ENCODE measurements at regions of chr22 and their contacts with region 1.

Region 1: DNA sequence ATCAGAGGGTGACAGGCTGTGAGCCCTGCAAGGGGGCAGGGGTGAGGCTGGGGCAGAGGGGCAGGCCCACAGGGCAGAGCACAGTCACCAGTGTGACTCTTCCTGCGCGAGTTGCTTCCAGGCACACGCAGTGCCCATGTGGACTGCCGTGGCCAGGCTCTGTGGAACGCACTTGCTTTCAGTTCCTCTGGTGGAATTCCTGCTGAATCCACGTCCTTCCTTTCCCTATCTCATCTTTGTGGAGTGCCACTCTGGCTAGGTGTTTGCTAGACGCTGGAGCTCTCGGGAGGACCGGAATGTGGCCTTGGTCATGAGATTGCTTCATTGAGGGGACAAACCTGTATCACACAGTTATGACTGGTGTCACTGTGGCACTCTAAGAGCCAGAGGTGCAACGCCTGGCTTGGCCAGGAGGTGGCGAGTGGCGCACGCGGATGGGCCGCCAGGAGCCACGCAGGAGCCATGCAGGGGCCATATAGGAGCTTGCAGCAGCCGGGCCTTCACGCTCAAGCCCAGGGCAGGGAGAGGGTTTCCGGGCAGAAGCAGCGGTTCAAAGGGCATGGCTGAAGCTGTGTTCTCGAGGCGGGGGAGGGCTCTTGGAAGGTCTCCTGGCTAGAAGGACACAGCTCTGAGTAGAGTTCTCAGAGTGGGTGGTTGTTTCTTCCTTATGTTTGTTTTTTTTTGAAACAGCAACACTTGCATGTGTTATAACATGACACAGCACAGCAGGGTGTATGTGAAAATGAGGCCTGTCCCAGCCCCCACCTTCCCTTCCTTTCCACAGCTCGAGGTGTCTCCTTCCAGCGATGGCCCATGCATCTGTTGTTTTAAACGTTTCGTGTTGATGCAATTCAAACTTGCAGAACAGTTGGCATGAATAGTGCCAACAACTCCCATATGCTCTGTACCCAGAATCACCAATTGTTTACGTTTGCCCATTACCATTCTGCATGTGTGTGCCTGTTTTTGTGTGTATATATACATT is 36.2 kb downstream of the TBC1D22A start:
- DNase-seq: peak; percentile 59 to 72 (median 64)
- H3K4me3 ChIP-seq: no peak overlapping the region
- H3K4me3 Mint-ChIP-seq: no peak overlapping the region
- H3K27ac ChIP-seq: no peak overlapping the region
- H3K27ac Mint-ChIP-seq: peak overlapping the region; percentile 82 to 96 (median 91)
- H3K4me1 ChIP-seq: peaks cover 11% of the 10 kb centered on the region
- H3K4me1 Mint-ChIP-seq: peaks cover 12 to 33% (median 25%) of the 10 kb centered on the region in 4 donors
- H3K27me3 ChIP-seq: no peaks in the 10 kb centered on the region
- H3K27me3 Mint-ChIP-seq: no peaks in the 10 kb centered on the region

Region 2: DNA sequence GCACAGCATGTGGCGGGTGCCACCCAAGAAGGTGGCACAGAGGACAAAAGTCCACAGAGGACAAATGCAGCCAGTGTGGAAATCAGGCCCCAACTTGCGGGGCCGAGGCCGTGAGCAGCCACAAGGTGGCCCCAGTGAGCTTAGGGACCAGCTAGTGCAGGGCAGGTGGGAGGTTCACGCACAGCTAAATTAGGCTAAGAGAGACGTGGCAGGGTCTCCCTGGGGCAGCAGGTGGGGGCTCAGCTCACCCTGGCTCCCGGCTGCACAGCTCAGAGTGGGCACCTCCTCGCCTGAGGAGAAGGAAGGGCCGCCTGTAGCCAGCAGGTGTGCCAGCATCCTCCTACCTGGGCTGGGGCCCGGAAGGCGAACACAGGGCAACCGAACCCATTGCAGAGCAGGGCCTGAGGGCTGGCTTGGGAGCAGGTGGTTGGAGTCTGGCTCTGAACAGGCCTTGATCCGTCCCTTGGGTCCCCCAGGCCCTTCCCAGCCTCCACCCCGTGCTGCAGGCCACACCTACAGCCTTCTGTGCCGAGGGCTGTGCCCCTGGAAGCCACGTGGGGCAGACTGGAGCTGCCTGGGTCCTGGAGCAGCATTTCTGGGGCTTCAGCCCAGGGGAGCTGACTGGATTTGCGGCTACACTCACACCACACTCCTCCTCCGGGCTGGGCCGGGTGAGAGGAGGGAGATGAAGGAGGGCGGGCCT is 235.1 kb before region 1 on chr22:
- CTCF ChIA-PET with region 1: interaction called, 38 read pairs
- POLR2A ChIA-PET with region 1: interaction called, 3 read pairs
- intact Hi-C with region 1: no loop called
- DNase-seq: peak; percentile 71 to 77 (median 72)
- H3K4me3 ChIP-seq: no peak overlapping the region
- H3K4me3 Mint-ChIP-seq: peak overlapping the region in 6 of 8 donors; percentile 20 to 71 (median 54)
- H3K27ac ChIP-seq: no peak overlapping the region
- H3K27ac Mint-ChIP-seq: peak overlapping the region in 2 of 7 donors; percentile 29 to 32
- H3K4me1 ChIP-seq: peaks cover 6% of the 10 kb centered on the region
- H3K4me1 Mint-ChIP-seq: peaks cover 2 to 5% (median 4%) of the 10 kb centered on the region in 4 donors
- H3K27me3 ChIP-seq: no peaks in the 10 kb centered on the region
- H3K27me3 Mint-ChIP-seq: no peaks in the 10 kb centered on the region

Region 3: GRCh38 chr22:46748908-46749675 is 49.6 kb before region 1 on chr22:
- CTCF ChIA-PET with region 1: interaction called, 233 read pairs
- POLR2A ChIA-PET with region 1: interaction called, 5 read pairs
- intact Hi-C with region 1: no loop called
- DNase-seq: peak; percentile 68 to 82 (median 71)
- H3K4me3 ChIP-seq: peak overlapping the region; percentile 23 to 39
- H3K4me3 Mint-ChIP-seq: peak overlapping the region; percentile 75 to 89 (median 82)
- H3K27ac ChIP-seq: peak overlapping the region; percentile 56
- H3K27ac Mint-ChIP-seq: peak overlapping the region; percentile 96 to 99 (median 96)
- H3K4me1 ChIP-seq: peaks cover 37% of the 10 kb centered on the region
- H3K4me1 Mint-ChIP-seq: peaks cover 17 to 26% (median 23%) of the 10 kb centered on the region in 4 donors
- H3K27me3 ChIP-seq: no peaks in the 10 kb centered on the region
- H3K27me3 Mint-ChIP-seq: no peaks in the 10 kb centered on the region

Region 4: DNA sequence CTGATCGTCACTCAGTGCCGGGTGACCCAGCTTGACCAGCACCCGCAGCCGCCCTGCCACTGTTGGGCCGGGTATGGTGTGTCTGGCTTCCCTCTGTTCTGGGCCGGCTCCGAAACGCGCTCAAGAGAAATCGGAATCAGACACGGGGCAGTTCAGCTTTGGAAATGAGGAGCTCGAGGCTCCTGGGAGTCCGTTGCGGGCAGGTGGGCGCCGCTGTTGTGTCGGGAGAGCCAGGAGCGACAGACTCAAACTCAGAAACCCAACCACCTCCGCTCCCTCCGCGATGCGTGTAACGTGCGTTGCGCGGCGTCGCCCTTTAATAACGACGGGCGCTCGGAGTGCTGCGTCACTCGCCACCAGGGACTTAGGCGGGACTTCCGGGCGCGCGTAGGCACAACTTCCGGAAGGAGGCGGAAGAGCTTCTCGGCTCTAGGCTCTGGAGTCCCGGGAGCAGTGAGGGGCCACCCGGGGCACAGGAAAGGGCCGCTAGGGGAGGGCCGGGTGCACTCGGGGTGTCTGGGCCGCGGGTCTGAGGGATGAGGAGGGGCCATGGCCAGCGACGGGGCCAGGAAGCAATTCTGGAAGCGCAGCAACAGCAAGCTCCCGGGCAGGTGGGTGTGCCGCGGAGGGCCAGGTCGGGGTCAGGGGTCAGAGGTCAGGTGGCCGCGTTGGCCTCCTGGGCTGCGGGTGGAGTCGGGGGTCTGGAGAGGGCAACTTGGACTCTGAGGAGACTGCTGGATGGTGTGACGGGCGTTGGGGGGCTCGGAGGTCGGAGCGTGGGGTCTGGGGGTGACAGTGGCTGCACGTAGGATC is 36.2 kb before region 1 on chr22 and contains the start of gene TBC1D22A:
- CTCF ChIA-PET with region 1: interaction called, 233 read pairs
- POLR2A ChIA-PET with region 1: interaction called, 90 read pairs
- intact Hi-C with region 1: loop called (anchors 1 kb)
- DNase-seq: peak; percentile 91 to 94 (median 93)
- H3K4me3 ChIP-seq: peak within 1 kb of the TSS; percentile 94 to 96
- H3K4me3 Mint-ChIP-seq: peak within 1 kb of the TSS; percentile 98 to 100 (median 99)
- H3K27ac ChIP-seq: peak within 1 kb of the TSS; percentile 99
- H3K27ac Mint-ChIP-seq: peak within 1 kb of the TSS; percentile 99 to 100 (median 100)
- H3K4me1 ChIP-seq: peaks cover 51% of the 10 kb centered on the region
- H3K4me1 Mint-ChIP-seq: peaks cover 38 to 76% (median 53%) of the 10 kb centered on the region in 4 donors
- H3K27me3 ChIP-seq: no peaks in the 10 kb centered on the region
- H3K27me3 Mint-ChIP-seq: no peaks in the 10 kb centered on the region
- total RNA-seq, gene TBC1D22A: 49.0 to 49.2 TPM

Region 5: DNA sequence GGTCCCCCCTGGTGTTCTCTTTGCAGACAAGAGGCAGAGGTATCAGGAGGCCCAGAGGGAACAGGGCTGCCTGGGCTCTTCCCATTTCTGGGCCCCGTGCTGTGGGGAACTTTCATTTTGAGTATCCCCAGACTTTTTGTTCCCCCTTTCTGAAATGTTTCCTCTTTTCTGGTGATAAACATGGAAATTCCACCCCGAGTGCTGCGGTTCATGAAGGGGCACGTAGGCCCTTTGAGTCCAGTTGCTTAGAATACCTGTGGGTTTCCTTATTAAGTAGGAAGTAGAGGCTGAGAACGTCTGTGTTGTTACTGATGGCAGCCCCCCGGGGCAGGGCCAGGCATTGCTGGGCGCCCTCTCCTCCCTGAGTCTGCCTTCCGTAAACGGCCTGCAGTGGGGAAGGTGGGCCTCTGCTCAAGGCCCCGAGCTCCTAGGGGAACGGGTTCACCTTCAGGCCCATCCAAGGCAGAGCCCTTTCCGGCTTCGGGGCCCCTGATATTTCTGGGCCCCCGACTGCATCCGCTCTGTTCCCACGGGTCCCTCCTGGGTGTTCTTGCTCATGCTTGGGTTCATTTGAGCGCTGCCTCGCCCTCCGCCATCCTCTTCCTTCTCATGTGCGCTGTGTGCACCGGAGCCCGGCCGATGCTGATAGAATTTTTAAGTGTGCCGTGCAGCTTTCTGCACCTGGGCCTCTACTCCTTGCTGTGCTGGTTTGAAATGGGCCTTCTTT is 24.2 kb before region 1 on chr22:
- CTCF ChIA-PET with region 1: interaction called, 25 read pairs
- POLR2A ChIA-PET with region 1: interaction called, 5 read pairs
- intact Hi-C with region 1: no loop called
- DNase-seq: peak in 3 of 5 donors; percentile 34 to 50 (median 34)
- H3K4me3 ChIP-seq: peak overlapping the region in 1 of 2 donors; percentile 32
- H3K4me3 Mint-ChIP-seq: peak overlapping the region; percentile 62 to 87 (median 76)
- H3K27ac ChIP-seq: peak overlapping the region; percentile 73
- H3K27ac Mint-ChIP-seq: peak overlapping the region; percentile 91 to 98 (median 93)
- H3K4me1 ChIP-seq: peaks cover 80% of the 10 kb centered on the region
- H3K4me1 Mint-ChIP-seq: peaks cover 57 to 83% (median 74%) of the 10 kb centered on the region in 4 donors
- H3K27me3 ChIP-seq: no peaks in the 10 kb centered on the region
- H3K27me3 Mint-ChIP-seq: no peaks in the 10 kb centered on the region

Region 6: GRCh38 chr22:46812034-46812605 is 13.5 kb after region 1 on chr22:
- CTCF ChIA-PET with region 1: interaction called, 10 read pairs
- POLR2A ChIA-PET with region 1: no interaction called
- intact Hi-C with region 1: no loop called
- DNase-seq: no peak
- H3K4me3 ChIP-seq: no peak overlapping the region
- H3K4me3 Mint-ChIP-seq: no peak overlapping the region
- H3K27ac ChIP-seq: no peak overlapping the region
- H3K27ac Mint-ChIP-seq: no peak overlapping the region
- H3K4me1 ChIP-seq: peaks cover 1% of the 10 kb centered on the region
- H3K4me1 Mint-ChIP-seq: peaks cover 21 to 35% (median 28%) of the 10 kb centered on the region in 4 donors
- H3K27me3 ChIP-seq: no peaks in the 10 kb centered on the region
- H3K27me3 Mint-ChIP-seq: no peaks in the 10 kb centered on the region

Region 7: GRCh38 chr22:47053726-47054141 is 255.1 kb after region 1 on chr22:
- CTCF ChIA-PET with region 1: no interaction called
- POLR2A ChIA-PET with region 1: no interaction called
- intact Hi-C with region 1: no loop called
- DNase-seq: no peak
- H3K4me3 ChIP-seq: no peak overlapping the region
- H3K4me3 Mint-ChIP-seq: no peak overlapping the region
- H3K27ac ChIP-seq: no peak overlapping the region
- H3K27ac Mint-ChIP-seq: peak overlapping the region in 1 of 7 donors; percentile 29
- H3K4me1 ChIP-seq: no peaks in the 10 kb centered on the region
- H3K4me1 Mint-ChIP-seq: peaks cover 0 to 9% (median 2%) of the 10 kb centered on the region in 4 donors
- H3K27me3 ChIP-seq: no peaks in the 10 kb centered on the region
- H3K27me3 Mint-ChIP-seq: no peaks in the 10 kb centered on the region

Measured in CD4-positive, alpha-beta memory T cell (primary cell).